ENCODE measurements at regions of chr6 and their contacts with region 1.

Region 1: DNA sequence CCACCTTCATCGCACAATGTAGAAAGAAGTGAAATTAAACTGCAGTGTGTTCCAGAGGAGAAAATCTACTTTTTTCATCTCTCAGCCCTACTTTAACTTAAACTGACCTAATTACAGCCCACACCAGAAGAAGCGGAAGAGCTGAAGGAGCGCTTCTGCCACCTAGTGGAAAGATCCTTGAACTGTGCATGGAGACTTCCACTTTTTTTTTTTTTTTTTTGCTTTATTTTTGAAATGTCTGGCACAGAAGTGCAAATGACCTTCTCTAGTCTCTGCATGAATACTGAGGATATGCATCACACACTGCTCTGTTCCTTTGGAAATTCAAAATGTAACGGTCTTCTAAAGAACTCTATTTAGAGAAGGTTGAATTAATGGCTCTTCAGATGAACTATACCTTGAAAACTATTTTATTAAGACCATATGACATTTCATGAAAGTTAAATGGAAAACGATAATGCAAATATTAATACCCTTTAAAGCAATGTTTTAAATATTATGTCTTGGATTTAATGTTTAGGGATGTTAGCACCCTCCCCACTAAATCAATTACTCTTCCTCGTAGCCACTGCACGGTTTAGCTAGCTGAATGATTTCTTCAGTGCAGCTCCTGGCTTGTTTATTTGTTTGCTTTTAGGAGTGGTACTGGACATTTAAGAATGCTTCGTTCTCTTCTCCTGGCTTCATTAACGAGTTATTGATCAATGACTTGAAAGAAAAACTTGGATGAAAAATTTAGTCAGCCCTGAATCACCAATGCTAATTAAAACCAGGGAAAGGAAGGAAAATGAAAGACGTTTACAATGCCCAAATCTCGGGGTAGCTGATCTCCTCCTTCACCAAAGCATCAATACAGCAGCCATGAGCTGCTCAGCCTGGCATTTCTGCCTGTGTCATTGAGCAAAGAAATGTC is 569.6 kb upstream of the GJE1 start:
- DNase-seq: peak; percentile 73
- ATAC-seq: peak; percentile 74
- H3K4me3 ChIP-seq: no peak overlapping the region
- H3K27ac ChIP-seq: no peak overlapping the region
- H3K4me1 ChIP-seq: peaks cover 0 to 3% of the 10 kb centered on the region in 2 experiments; a peak in 1 of 4 replicates
- H3K27me3 ChIP-seq: no peaks in the 10 kb centered on the region
- CTCF ChIP-seq: peak; percentile 57 to 85 (median 79); a peak in 5 of 6 replicates
- POLR2A ChIP-seq: no peak
- RAD21 ChIP-seq: peak; percentile 90

Region 2: GRCh38 chr6:139881728-139882211 is 1681.3 kb before region 1 on chr6:
- CTCF ChIA-PET with region 1: no interaction called
- POLR2A ChIA-PET with region 1: no interaction called
- RAD21 ChIA-PET with region 1: no interaction called
- intact Hi-C with region 1: loop called (anchors 2 kb)
- DNase-seq: peak; percentile 53
- ATAC-seq: peak; percentile 90
- H3K4me3 ChIP-seq: no peak overlapping the region
- H3K27ac ChIP-seq: no peak overlapping the region
- H3K4me1 ChIP-seq: peaks cover 14 to 23% of the 10 kb centered on the region in 2 experiments
- H3K27me3 ChIP-seq: no peaks in the 10 kb centered on the region
- CTCF ChIP-seq: peak; percentile 35 to 74 (median 60); a peak in 5 of 6 replicates
- POLR2A ChIP-seq: no peak
- RAD21 ChIP-seq: peak; percentile 74

Region 3: GRCh38 chr6:140897804-140898573 is 665.1 kb before region 1 on chr6:
- CTCF ChIA-PET with region 1: no interaction called
- POLR2A ChIA-PET with region 1: no interaction called
- RAD21 ChIA-PET with region 1: no interaction called
- intact Hi-C with region 1: loop called (anchors 10 kb)
- DNase-seq: peak; percentile 67
- ATAC-seq: peak; percentile 99
- H3K4me3 ChIP-seq: peak overlapping the region; percentile 73 to 90
- H3K27ac ChIP-seq: peak overlapping the region; percentile 36
- H3K4me1 ChIP-seq: peaks cover 4 to 15% of the 10 kb centered on the region in 2 experiments; a peak in 3 of 4 replicates
- H3K27me3 ChIP-seq: no peaks in the 10 kb centered on the region
- CTCF ChIP-seq: no peak
- POLR2A ChIP-seq: no peak
- RAD21 ChIP-seq: no peak

Region 4: DNA sequence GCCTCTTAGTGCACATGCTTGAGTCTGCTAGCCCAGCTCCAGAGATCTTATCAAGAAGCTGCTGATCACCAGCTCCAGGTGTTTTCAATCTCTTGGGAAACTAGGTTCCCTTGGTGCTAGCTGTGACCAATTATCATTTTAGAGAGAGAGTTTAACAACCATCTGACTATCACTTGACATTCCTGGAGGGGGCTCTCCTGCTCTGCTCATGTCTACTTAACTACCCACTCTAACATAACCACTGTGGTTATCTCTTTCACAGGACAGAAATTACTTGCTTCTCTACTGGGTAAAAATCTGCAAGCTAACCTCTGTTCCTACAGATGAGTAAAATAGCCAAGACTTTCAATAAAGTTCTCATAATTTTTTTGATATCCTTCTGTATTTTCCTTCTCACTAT is 253.8 kb before region 1 on chr6:
- CTCF ChIA-PET with region 1: interaction called, 3 read pairs
- POLR2A ChIA-PET with region 1: no interaction called
- RAD21 ChIA-PET with region 1: no interaction called
- intact Hi-C with region 1: loop called (anchors 2 kb)
- DNase-seq: no peak
- ATAC-seq: peak; percentile 64
- H3K4me3 ChIP-seq: no peak overlapping the region
- H3K27ac ChIP-seq: no peak overlapping the region
- H3K4me1 ChIP-seq: no peaks in the 10 kb centered on the region
- H3K27me3 ChIP-seq: no peaks in the 10 kb centered on the region
- CTCF ChIP-seq: peak in 1 of 3 experiments; percentile 30; a peak in 1 of 6 replicates
- POLR2A ChIP-seq: no peak
- RAD21 ChIP-seq: peak; percentile 59

Measured in HCT116 (cell line).